Mucosa of descending colon (tissue), 3 donors: ENCODE measurements at regions of chr3 and their contacts with region 1.

Region 1: GRCh38 chr3:107414325-107414964 is 37.2 kb downstream of the CCDC54 start:
- DNase-seq: no peak
- ATAC-seq: no peak
- H3K4me3 ChIP-seq: no peak overlapping the region
- H3K4me1 ChIP-seq: no peaks in the 10 kb centered on the region
- CTCF ChIP-seq: no peak

Region 2: GRCh38 chr3:107271787-107272387 is 142.6 kb before region 1 on chr3:
- intact Hi-C with region 1: loop called in 1 of 2 experiments (anchors 10 kb)
- DNase-seq: no peak
- ATAC-seq: peak; percentile 37
- H3K4me3 ChIP-seq: no peak overlapping the region
- H3K4me1 ChIP-seq: peaks cover 2% of the 10 kb centered on the region
- CTCF ChIP-seq: peak; percentile 21

Region 3: GRCh38 chr3:107578523-107578922 is 164.1 kb after region 1 on chr3:
- intact Hi-C with region 1: no loop called
- DNase-seq: no peak
- ATAC-seq: no peak
- H3K4me3 ChIP-seq: no peak overlapping the region
- H3K4me1 ChIP-seq: no peaks in the 10 kb centered on the region
- CTCF ChIP-seq: no peak